ENCODE measurements at regions of chr10 and their contacts with region 1.

Region 1: DNA sequence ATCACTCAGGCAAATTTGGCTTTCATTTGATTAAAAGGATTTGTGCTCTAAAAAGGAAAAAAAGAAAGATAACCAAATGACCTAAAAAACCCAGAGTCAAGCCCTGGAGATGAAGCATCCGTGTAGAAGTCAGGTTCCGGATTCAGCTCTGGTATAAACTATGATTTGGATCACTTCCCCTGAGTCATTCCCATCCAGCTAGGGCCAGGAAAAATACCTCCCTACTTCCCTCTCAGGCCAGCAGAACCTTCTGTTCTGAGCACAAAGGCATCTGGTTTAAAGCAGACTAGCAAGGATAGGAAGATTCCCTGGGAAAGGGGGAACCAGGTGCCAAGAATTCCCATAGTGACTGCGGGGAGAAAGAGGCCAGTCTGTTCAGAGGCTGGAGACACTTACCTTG is 25.7 kb upstream of the NDST2 start:
- DNase-seq: no peak
- ATAC-seq: no peak
- H3K4me3 ChIP-seq: no peak overlapping the region
- H3K27ac ChIP-seq: no peak overlapping the region
- H3K4me1 ChIP-seq: no peaks in the 10 kb centered on the region
- H3K27me3 ChIP-seq: no peaks in the 10 kb centered on the region
- CTCF ChIP-seq: no peak

Region 2: GRCh38 chr10:73814896-73815718 is 22.0 kb before region 1 on chr10:
- intact Hi-C with region 1: no loop called
- DNase-seq: peak in 1 of 2 donors; percentile 62
- ATAC-seq: no peak
- H3K4me3 ChIP-seq: no peak overlapping the region
- H3K27ac ChIP-seq: peak overlapping the region; percentile 58
- H3K4me1 ChIP-seq: peaks cover 18% of the 10 kb centered on the region
- H3K27me3 ChIP-seq: no peaks in the 10 kb centered on the region
- CTCF ChIP-seq: peak; percentile 4

Region 3: GRCh38 chr10:73931767-73932619 is 94.9 kb after region 1 on chr10:
- intact Hi-C with region 1: loop called in 1 of 2 experiments (anchors 10 kb)
- DNase-seq: no peak
- ATAC-seq: peak in 2 of 4 donors; percentile 39 to 46
- H3K4me3 ChIP-seq: no peak overlapping the region
- H3K27ac ChIP-seq: no peak overlapping the region
- H3K4me1 ChIP-seq: no peaks in the 10 kb centered on the region
- H3K27me3 ChIP-seq: no peaks in the 10 kb centered on the region
- CTCF ChIP-seq: no peak

Region 4: DNA sequence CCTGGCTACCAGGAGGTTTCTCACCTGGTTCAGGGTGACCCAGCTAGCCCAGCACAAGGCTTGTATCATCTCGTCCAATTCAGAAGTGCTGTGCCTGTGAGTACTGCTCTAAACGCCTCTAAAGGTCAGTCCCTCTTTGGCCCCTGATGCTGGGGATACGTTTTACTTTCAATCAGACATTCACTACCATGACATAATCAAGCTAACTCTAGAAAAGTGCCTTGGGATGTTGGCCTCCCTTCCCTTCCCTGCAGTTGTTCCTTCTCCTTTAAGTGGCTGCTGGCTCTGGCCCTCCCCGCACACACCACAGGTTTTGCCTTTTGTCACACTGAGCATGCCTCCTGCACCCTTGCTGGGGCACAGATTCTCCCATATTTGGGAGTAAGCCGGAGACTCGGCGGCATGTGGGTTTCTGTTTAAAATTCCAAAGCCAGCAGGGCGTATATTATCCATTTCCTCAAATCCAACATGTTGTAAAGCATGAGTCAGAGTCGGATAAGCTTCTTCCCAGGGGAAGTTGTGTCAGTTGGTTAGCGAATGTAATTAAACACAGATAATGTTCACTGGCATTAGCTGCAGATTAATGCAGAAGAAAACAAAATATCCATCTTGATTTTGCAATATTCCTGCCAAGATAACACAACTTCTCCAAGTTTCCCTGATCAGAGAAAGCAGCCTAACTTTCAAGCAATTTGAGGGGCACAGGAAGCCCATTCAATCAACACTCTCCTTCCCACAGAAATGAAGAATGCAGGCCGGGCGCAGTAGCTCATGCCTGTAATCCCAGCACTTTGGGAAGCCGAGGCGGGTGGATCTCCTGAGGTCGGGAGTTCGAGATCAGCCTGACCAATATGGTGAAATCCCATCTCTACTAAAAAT is 129.1 kb after region 1 on chr10:
- intact Hi-C with region 1: no loop called
- DNase-seq: peak; percentile 73 to 80
- ATAC-seq: peak; percentile 85 to 91 (median 88)
- H3K4me3 ChIP-seq: peak overlapping the region; percentile 40
- H3K27ac ChIP-seq: peak overlapping the region; percentile 84
- H3K4me1 ChIP-seq: peaks cover 6% of the 10 kb centered on the region
- H3K27me3 ChIP-seq: no peaks in the 10 kb centered on the region
- CTCF ChIP-seq: no peak

Measured in psoas muscle (tissue), 8 donors.